ENCODE measurements at regions of chr1 and their contacts with region 1.

Region 1: DNA sequence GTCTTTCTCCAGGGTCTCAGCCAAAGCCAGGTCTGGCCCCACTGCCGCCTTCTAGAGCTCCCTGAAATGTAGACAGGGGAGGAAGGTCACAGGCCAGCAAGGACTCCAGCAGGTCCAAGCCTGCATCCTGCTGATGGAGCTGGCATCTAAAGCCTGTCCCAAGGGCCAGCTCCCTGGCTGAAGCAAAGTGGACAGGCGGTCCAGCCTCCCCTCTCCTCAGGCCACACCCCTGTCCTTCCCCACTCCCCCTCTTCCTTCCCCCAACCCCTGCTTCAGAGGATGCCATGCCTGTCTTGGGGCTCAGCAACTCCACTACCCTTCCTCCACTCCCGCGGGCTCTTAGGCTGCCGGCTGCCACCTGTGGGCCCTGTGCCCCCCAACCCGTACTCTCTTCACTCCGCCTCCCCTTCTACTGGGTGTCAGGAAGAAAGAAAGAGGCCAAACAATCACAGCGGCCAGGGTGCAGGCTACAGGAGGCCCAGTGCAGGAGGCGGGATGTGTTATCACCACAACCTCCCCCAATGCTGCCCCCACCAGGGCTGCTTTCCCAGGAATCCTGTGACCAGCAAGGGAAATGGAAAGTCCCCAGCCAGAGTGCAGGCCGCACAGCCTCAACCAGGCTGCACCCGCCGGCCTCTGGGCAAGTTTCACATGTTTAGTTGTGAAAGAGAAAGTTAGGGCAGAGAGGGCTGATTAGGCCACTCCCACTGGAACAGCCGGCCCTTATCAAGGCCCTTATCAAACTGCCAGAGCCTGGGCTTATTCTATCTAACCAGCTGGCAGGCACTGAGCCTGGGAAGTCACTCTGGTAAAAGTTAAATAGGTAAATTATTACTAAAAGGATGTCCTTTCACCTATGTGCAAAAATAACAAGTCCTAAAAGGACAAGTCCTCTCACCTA is 34.1 kb downstream of the ACOT7 start:
- DNase-seq: peak; percentile 81
- H3K4me3 ChIP-seq: no peak overlapping the region
- H3K27ac ChIP-seq: peak overlapping the region; percentile 69 to 79
- H3K4me1 ChIP-seq: peaks cover 10 to 67% of the 10 kb centered on the region in 2 experiments
- H3K27me3 ChIP-seq: no peaks in the 10 kb centered on the region
- CTCF ChIP-seq: 0 out of 2 replicates have a peak, but pooled peaks have one; percentile 11
- EP300 ChIP-seq: peak in 1 of 2 experiments; percentile 37; a peak in 1 of 4 replicates
- RAD21 ChIP-seq: no peak; the same call in 1 of the 2 replicates

Region 2: DNA sequence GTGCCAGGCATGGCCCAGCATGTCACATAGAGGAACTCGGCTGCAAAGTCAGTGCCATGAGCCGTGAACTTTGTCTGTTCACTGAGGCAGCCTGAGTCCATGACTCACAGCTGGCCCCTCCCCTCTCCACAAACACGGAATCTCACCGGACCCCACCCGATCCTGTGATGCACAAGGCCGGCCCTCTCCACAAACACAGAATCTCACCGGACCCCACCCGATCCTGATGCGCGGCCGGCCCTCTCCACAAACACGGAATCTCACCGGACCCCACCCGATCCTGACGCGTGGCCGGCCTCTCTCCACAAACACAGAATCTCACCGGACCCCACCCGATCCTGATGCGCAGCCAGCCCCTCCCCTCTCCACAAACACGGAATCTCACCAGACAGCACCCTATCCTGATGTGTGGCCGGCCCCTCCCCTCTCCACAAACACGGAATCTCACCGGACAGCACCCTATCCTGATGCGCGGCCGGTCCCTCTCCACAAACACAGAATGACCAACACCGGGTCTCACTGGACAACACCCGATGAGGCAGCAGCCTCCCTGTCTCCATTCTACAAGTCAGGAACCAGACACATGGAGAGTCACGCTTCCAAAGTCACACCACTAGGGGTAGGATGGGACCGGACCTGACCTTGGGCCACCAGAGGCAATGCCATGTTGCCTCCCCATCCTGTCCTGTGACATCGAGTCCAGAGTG is 59.0 kb before region 1 on chr1:
- CTCF ChIA-PET with region 1: no interaction called
- POLR2A ChIA-PET with region 1: no interaction called
- DNase-seq: no peak
- H3K4me3 ChIP-seq: no peak overlapping the region
- H3K27ac ChIP-seq: no peak overlapping the region
- H3K4me1 ChIP-seq: peaks cover 0 to 26% of the 10 kb centered on the region in 2 experiments; a peak in 1 of 4 replicates
- H3K27me3 ChIP-seq: no peaks in the 10 kb centered on the region
- CTCF ChIP-seq: no peak
- EP300 ChIP-seq: no peak
- RAD21 ChIP-seq: no peak

Region 3: GRCh38 chr1:6343506-6344405 is 15.7 kb before region 1 on chr1:
- CTCF ChIA-PET with region 1: interaction called, 19 read pairs
- POLR2A ChIA-PET with region 1: interaction called, 3 read pairs
- DNase-seq: peak; percentile 83
- H3K4me3 ChIP-seq: peak overlapping the region in 1 of 2 experiments; percentile 55; a peak in 1 of 4 replicates
- H3K27ac ChIP-seq: no peak overlapping the region
- H3K4me1 ChIP-seq: no peaks in the 10 kb centered on the region; a peak in 1 of 4 replicates
- H3K27me3 ChIP-seq: no peaks in the 10 kb centered on the region
- CTCF ChIP-seq: peak; percentile 88
- EP300 ChIP-seq: no peak
- RAD21 ChIP-seq: peak; percentile 93

Region 4: GRCh38 chr1:6378096-6378746 is 18.8 kb after region 1 on chr1:
- CTCF ChIA-PET with region 1: interaction called, 39 read pairs
- POLR2A ChIA-PET with region 1: no interaction called
- DNase-seq: peak; percentile 83
- H3K4me3 ChIP-seq: no peak overlapping the region
- H3K27ac ChIP-seq: peak overlapping the region in 1 of 2 experiments; percentile 23; a peak in 1 of 4 replicates
- H3K4me1 ChIP-seq: peaks cover 0 to 5% of the 10 kb centered on the region in 2 experiments; a peak in 1 of 4 replicates
- H3K27me3 ChIP-seq: no peaks in the 10 kb centered on the region
- CTCF ChIP-seq: peak; percentile 23
- EP300 ChIP-seq: no peak
- RAD21 ChIP-seq: peak; percentile 47

Region 5: DNA sequence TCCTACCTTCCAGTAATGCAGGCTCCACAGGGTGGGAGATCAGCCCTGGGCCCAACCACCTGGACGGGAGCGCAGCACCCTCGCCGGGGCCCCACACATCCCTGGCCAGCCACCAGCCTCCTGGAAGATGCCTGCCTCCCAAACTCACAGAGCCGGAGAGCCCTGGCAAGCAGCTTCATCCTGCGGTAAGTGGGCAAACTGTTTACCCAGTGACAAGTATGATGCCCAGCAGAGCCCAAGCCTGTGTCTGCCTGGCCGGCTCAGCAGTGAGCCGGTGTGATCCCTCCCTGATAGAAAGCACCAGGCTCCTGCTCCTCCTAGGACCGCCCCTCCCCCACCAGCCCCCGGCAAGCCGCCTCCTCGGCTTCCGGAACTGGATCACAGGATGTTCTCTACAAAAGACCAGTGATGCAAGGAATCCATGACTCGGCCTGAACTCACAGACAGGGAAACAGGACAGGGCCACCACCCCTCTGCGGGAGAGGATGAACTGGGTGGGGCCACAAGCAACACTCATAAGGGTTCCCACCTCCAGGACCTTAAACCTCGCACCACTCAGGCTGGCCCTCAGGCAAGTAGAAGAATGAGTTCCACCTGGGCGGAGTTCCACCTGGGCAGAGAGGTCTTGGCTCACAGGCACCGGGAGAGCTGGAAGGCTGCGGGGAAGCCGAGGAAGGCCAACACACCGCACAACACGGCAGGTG is 26.2 kb after region 1 on chr1:
- CTCF ChIA-PET with region 1: interaction called, 39 read pairs
- POLR2A ChIA-PET with region 1: interaction called, 9 read pairs
- DNase-seq: peak; percentile 93
- H3K4me3 ChIP-seq: peak overlapping the region; percentile 45 to 66
- H3K27ac ChIP-seq: peak overlapping the region; percentile 73 to 93
- H3K4me1 ChIP-seq: peaks cover 0 to 24% of the 10 kb centered on the region in 2 experiments; a peak in 2 of 4 replicates
- H3K27me3 ChIP-seq: no peaks in the 10 kb centered on the region
- CTCF ChIP-seq: no peak
- EP300 ChIP-seq: peak in 1 of 2 experiments; percentile 69; a peak in 2 of 4 replicates
- RAD21 ChIP-seq: no peak

Region 6: DNA sequence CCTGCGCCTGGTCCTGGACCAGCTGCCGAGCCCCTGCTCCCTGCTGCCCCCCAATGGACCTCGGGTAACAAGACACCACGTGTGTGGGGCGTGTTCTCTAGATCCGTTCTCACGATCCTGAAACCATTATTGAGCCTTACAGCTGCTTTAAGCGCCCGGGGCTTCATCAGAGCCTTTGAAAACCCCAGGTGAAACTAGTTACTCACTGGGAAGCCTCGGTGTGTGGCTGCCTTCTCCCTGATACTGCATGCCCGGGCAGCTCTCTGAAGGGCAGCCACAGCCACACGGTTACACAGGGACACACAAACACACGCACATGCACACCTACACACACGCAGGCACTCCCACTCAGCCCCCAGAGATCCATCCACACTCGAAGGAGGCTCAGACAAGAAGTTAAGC is 55.0 kb after region 1 on chr1:
- CTCF ChIA-PET with region 1: interaction called, 50 read pairs
- POLR2A ChIA-PET with region 1: no interaction called
- DNase-seq: peak; percentile 87
- H3K4me3 ChIP-seq: no peak overlapping the region
- H3K27ac ChIP-seq: no peak overlapping the region
- H3K4me1 ChIP-seq: peaks cover 0 to 6% of the 10 kb centered on the region in 2 experiments; a peak in 1 of 4 replicates
- H3K27me3 ChIP-seq: peaks cover 17% of the 10 kb centered on the region
- CTCF ChIP-seq: peak; percentile 59
- EP300 ChIP-seq: no peak
- RAD21 ChIP-seq: peak; percentile 50

Region 7: GRCh38 chr1:6423321-6423999 is 64.0 kb after region 1 on chr1:
- CTCF ChIA-PET with region 1: interaction called, 11 read pairs
- POLR2A ChIA-PET with region 1: no interaction called
- DNase-seq: peak; percentile 81
- H3K4me3 ChIP-seq: 0 out of 4 replicates have a peak overlapping the region, but pooled peaks of 1 of the 2 experiments have one; percentile 11
- H3K27ac ChIP-seq: no peak overlapping the region
- H3K4me1 ChIP-seq: peaks cover 6 to 18% of the 10 kb centered on the region in 2 experiments; a peak in 1 of 4 replicates
- H3K27me3 ChIP-seq: peaks cover 26% of the 10 kb centered on the region
- CTCF ChIP-seq: peak; percentile 65
- EP300 ChIP-seq: no peak
- RAD21 ChIP-seq: peak; percentile 42

Region 8: GRCh38 chr1:6547301-6547700 is 187.8 kb after region 1 on chr1:
- CTCF ChIA-PET with region 1: no interaction called
- POLR2A ChIA-PET with region 1: no interaction called
- DNase-seq: no peak
- H3K4me3 ChIP-seq: no peak overlapping the region
- H3K27ac ChIP-seq: 0 out of 4 replicates have a peak overlapping the region, but pooled peaks of 1 of the 2 experiments have one; percentile 85
- H3K4me1 ChIP-seq: 0 out of 4 replicates have a peak, but pooled peaks cover 0 to 7% of the 10 kb centered on the region in 2 experiments
- H3K27me3 ChIP-seq: no peaks in the 10 kb centered on the region
- CTCF ChIP-seq: peak; percentile 39
- EP300 ChIP-seq: no peak
- RAD21 ChIP-seq: peak; percentile 28; the same call in 1 of the 2 replicates

Measured in SK-N-SH (cell line).